ENCODE measurements at regions of chr1 and their contacts with region 1.

Region 1: DNA sequence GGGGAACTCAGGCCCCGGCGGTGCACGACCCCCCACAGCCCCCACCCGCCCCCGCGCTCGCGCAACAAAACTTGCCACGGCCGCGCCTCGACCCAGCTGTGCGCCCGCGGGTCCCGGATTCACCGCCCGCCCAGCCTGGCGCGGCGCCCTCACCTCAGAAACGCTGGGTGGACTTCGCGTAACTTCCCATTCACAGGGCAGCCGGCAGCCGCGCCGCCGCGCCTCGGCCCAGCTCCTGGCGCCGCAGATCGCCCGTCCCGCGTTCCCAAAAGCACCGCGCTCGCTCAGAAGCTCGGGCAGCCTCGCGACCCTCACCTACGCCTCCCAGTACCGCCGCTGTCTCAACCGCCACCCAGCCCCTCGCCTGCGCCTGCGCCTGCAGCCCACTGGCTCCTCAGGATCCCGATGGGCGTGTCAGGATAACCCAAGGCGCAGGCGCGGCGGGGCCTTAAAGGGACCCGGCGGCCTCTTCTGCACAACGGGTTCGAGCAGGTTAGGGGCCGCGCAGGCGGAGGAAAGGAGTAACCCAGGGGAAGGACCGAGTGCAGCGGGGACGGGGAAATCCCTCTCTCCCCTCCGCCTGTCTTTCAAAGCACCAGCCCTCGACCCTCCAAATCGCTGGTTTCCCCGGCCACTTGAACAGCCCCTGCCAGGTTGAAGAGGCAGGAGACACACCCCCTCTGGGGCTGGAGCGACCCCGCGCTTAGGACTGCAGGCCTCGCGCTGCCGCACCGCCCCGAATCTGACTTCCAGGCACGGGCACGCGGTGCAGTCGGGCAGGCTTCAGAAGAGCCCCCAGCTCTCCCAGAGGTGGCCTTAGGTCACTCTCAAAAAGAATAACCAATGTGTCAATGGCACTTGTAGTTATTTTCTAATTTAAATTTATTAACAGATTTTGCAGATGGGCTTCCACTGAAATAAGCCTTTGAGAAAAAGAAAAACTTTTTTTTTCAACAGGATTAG is at the start of gene NBPF1:
- DNase-seq: peak; percentile 98
- ATAC-seq: peak; percentile 97
- H3K4me3 Mint-ChIP-seq: no peak within 1 kb of the TSS
- H3K27ac Mint-ChIP-seq: no peak within 1 kb of the TSS
- H3K4me1 Mint-ChIP-seq: no peaks in the 10 kb centered on the region
- H3K27me3 Mint-ChIP-seq: no peaks in the 10 kb centered on the region
- CTCF ChIP-seq: no peak
- total RNA-seq, gene NBPF1: 20.0 and 20.2 TPM in 2 replicates

Region 2: DNA sequence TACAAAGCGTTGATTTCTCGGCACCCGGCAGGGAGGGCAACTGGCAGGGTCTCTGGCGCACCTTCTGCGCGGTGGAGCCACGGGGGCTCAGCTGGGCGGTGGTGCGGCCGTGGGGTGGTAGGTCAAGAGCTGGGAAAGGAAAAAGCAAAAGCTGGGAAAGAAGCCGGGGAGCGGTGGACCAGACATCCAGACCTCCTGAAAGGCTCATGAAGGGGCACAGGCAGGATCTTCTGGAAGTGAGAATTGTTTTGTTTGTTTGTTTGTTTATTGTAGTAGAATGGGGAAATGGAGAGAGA is 92.2 kb before region 1 on chr1:
- CTCF ChIA-PET with region 1: no interaction called
- POLR2A ChIA-PET with region 1: no interaction called
- intact Hi-C with region 1: loop called (anchors 5 kb)
- DNase-seq: no peak
- ATAC-seq: no peak
- H3K4me3 Mint-ChIP-seq: no peak overlapping the region
- H3K27ac Mint-ChIP-seq: no peak overlapping the region
- H3K4me1 Mint-ChIP-seq: peaks cover 7% of the 10 kb centered on the region
- H3K27me3 Mint-ChIP-seq: peaks cover 26% of the 10 kb centered on the region
- CTCF ChIP-seq: no peak

Region 3: GRCh38 chr1:16644193-16644481 is 30.7 kb after region 1 on chr1:
- CTCF ChIA-PET with region 1: interaction called, 3 read pairs
- POLR2A ChIA-PET with region 1: interaction called, 11 read pairs
- intact Hi-C with region 1: loop called (anchors 1 kb)
- DNase-seq: no peak
- ATAC-seq: peak; percentile 40
- H3K4me3 Mint-ChIP-seq: no peak overlapping the region
- H3K27ac Mint-ChIP-seq: no peak overlapping the region
- H3K4me1 Mint-ChIP-seq: peaks cover 4% of the 10 kb centered on the region
- H3K27me3 Mint-ChIP-seq: no peaks in the 10 kb centered on the region
- CTCF ChIP-seq: no peak